A549 (cell line): ENCODE measurements at regions of chr12 and their contacts with region 1.

Region 1: GRCh38 chr12:63151623-63152320 is 771 bp upstream of the AVPR1A start:
- DNase-seq: peak; percentile 64 to 69
- ATAC-seq: peak; percentile 79 to 92
- H3K4me3 ChIP-seq: peak overlapping the region; percentile 49
- H3K27ac ChIP-seq: no peak overlapping the region
- H3K4me1 ChIP-seq: peaks cover 12% of the 10 kb centered on the region; the same call in 2 of the 3 replicates
- CTCF ChIP-seq: peak; percentile 75
- EP300 ChIP-seq: no peak
- POLR2A ChIP-seq: no peak
- RAD21 ChIP-seq: peak; percentile 51 to 69

Region 2: DNA sequence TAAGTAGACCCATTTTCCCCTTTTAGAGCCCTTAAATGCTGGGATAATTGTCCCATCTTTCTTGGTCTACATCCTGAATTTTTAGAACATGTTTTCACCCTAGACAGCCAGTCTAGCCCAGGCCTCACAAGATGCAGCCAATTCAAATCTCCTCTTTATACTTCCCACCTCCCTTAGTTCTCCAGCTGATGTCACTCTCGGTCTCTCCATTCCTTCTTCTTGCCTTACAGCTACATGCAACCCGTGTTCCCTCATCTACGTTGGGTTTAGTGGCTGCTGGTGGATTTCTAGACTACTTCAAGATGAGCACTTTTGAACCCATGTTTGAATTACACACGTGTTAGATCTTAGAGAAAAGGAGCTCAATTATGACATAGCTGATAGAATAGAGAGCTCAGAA is 348.8 kb before region 1 on chr12:
- CTCF ChIA-PET with region 1: no interaction called
- POLR2A ChIA-PET with region 1: no interaction called
- DNase-seq: no peak
- ATAC-seq: no peak
- H3K4me3 ChIP-seq: no peak overlapping the region
- H3K27ac ChIP-seq: no peak overlapping the region
- H3K4me1 ChIP-seq: peaks cover 19% of the 10 kb centered on the region
- CTCF ChIP-seq: 0 out of 3 replicates have a peak, but pooled peaks have one; percentile 9
- EP300 ChIP-seq: no peak
- POLR2A ChIP-seq: no peak
- RAD21 ChIP-seq: peak; percentile 12 to 58; a peak in 2 of 5 replicates

Region 3: GRCh38 chr12:63164911-63165310 is 13.1 kb after region 1 on chr12:
- CTCF ChIA-PET with region 1: interaction called, 22 read pairs
- POLR2A ChIA-PET with region 1: no interaction called
- DNase-seq: no peak
- ATAC-seq: peak in 1 of 2 experiments; percentile 24; a peak in 1 of 6 replicates
- H3K4me3 ChIP-seq: no peak overlapping the region
- H3K27ac ChIP-seq: no peak overlapping the region
- H3K4me1 ChIP-seq: no peaks in the 10 kb centered on the region
- CTCF ChIP-seq: no peak
- EP300 ChIP-seq: no peak
- POLR2A ChIP-seq: no peak
- RAD21 ChIP-seq: no peak

Region 4: DNA sequence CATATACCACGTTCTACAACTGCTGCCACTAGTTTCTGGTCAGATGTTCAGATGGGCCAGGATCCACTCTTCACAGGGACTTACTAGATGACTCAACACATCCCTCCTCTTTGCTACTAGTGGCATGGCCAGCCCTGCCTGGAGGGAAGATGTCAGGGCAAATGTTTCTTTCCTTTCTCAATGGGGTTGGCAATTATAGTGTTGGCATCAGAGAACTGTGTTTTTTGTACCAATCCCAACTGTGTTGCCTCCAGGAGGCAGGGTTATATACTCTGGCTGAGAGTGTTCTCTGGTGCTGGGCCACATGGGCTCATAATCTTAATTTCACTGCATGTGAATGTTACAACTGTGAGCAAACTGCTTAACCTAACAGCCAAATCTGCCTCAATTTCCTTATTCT is 69.1 kb after region 1 on chr12:
- CTCF ChIA-PET with region 1: no interaction called
- POLR2A ChIA-PET with region 1: no interaction called
- DNase-seq: no peak
- ATAC-seq: no peak
- H3K4me3 ChIP-seq: no peak overlapping the region
- H3K27ac ChIP-seq: no peak overlapping the region
- H3K4me1 ChIP-seq: no peaks in the 10 kb centered on the region
- CTCF ChIP-seq: no peak
- EP300 ChIP-seq: no peak
- POLR2A ChIP-seq: no peak
- RAD21 ChIP-seq: no peak

Region 5: GRCh38 chr12:63276537-63277365 is 125.0 kb after region 1 on chr12:
- CTCF ChIA-PET with region 1: interaction called, 10 read pairs
- POLR2A ChIA-PET with region 1: no interaction called
- DNase-seq: peak in 1 of 2 experiments; percentile 58
- ATAC-seq: peak; percentile 90 to 96
- H3K4me3 ChIP-seq: peak overlapping the region; percentile 16; the same call in 1 of the 3 replicates
- H3K27ac ChIP-seq: no peak overlapping the region
- H3K4me1 ChIP-seq: no peaks in the 10 kb centered on the region
- CTCF ChIP-seq: peak; percentile 69
- EP300 ChIP-seq: no peak
- POLR2A ChIP-seq: no peak
- RAD21 ChIP-seq: peak; percentile 66 to 76